ENCODE measurements at regions of chr14 and their contacts with region 1.

Region 1: DNA sequence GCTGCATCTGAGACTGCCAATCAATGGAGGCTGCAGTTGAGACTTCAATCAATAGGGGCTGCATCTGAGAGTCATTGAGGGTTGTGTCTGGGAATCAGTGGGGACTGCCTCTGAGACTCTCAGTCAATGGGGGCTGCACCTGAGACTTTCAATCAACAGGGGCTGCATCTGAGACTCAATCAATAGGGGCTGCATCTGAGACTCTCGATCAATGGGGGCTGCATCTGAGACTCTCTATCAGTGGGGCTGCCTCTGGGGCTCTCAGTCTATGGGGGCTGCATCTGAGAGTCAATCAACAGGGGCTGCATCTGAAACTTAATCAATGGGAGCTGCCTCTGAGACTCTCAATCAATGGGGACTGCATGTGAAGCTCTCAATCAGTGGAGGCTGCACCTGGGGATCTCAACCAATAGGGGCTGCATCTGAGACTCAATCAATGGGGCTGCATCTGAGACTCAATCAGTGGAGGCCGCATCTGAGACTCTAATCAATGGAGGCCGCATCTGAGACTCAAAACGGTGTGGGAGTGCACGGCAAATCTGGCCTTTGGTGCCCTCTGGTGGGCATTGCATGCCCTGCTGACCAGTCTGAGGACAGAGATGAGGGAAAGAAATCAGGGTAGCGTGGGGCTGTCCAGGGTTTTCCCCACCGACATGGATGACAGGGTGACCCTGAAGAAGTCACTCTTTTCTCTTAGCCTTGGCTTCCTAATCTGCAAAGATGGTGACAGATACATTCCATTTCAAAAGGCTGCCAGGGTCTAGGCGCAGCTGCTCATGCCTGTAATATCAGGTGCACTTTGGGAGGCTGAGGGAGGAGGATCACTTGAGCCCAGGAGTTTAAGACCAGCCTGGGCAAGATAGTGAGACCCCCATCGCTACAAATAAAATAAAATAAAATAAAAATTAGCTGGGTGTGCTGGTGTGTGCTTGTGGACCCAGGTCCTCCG is 41.3 kb upstream of the EIF5 start:
- DNase-seq: peak; percentile 86
- ATAC-seq: peak; percentile 94
- H3K4me3 ChIP-seq: no peak overlapping the region
- H3K27ac ChIP-seq: no peak overlapping the region
- H3K4me1 ChIP-seq: no peaks in the 10 kb centered on the region
- H3K27me3 ChIP-seq: no peaks in the 10 kb centered on the region
- CTCF ChIP-seq: peak; percentile 92

Region 2: GRCh38 chr14:103185051-103185992 is 107.4 kb before region 1 on chr14:
- intact Hi-C with region 1: loop called (anchors 5 kb)
- DNase-seq: peak; percentile 15
- ATAC-seq: no peak
- H3K4me3 ChIP-seq: no peak overlapping the region
- H3K27ac ChIP-seq: no peak overlapping the region
- H3K4me1 ChIP-seq: peaks cover 8% of the 10 kb centered on the region
- H3K27me3 ChIP-seq: peaks cover 30% of the 10 kb centered on the region
- CTCF ChIP-seq: peak; percentile 74

Measured in upper lobe of right lung (tissue), 1 donor.